K562 (cell line): ENCODE measurements at regions of chr14 and their contacts with region 1.

Region 1: DNA sequence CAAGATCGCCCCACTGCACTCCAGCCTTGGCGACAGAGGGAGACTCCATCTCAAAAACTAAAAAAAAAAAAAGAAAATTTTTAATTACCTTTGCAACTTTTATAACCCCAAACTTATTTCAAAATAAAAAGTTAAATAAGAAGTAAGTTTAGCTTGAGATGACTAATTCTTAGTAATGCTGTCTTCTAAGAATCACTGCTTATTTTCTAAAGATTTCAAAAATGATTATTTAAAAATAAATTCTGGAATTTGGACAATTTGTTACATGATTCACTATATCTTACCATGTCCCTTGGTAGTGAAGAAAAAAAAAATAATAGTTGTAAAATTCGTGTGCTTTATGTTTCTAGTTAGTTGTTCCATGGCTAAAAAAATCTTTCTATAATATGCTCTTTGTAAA is 11.6 kb upstream of the HECTD1 start:
- DNase-seq: no peak
- ATAC-seq: no peak
- H3K4me3 ChIP-seq: no peak overlapping the region
- H3K27ac ChIP-seq: no peak overlapping the region
- H3K4me1 ChIP-seq: no peaks in the 10 kb centered on the region
- H3K27me3 ChIP-seq: no peaks in the 10 kb centered on the region
- CTCF ChIP-seq: no peak
- EP300 ChIP-seq: no peak
- POLR2A ChIP-seq: no peak
- RAD21 ChIP-seq: no peak

Region 2: GRCh38 chr14:31229638-31230229 is 10.6 kb after region 1 on chr14:
- CTCF ChIA-PET with region 1: no interaction called
- POLR2A ChIA-PET with region 1: interaction called, 11 read pairs
- in situ Hi-C with region 1: no loop called
- intact Hi-C with region 1: no loop called
- DNase-seq: peak; percentile 67 to 91 (median 79)
- ATAC-seq: peak; percentile 98
- H3K4me3 ChIP-seq: peak overlapping the region; percentile 16; the same call in 1 of the 2 replicates
- H3K27ac ChIP-seq: peak overlapping the region; percentile 77
- H3K4me1 ChIP-seq: peaks cover 0 to 11% of the 10 kb centered on the region in 2 experiments; a peak in 3 of 5 replicates
- H3K27me3 ChIP-seq: no peaks in the 10 kb centered on the region
- CTCF ChIP-seq: no peak
- EP300 ChIP-seq: peak; percentile 94
- POLR2A ChIP-seq: peak; percentile 58
- RAD21 ChIP-seq: peak in 1 of 2 experiments; percentile 13; a peak in 1 of 4 replicates

Region 3: GRCh38 chr14:31476131-31476866 is 257.1 kb after region 1 on chr14:
- CTCF ChIA-PET with region 1: no interaction called
- POLR2A ChIA-PET with region 1: no interaction called
- in situ Hi-C with region 1: no loop called
- intact Hi-C with region 1: no loop called
- DNase-seq: no peak
- ATAC-seq: no peak
- H3K4me3 ChIP-seq: no peak overlapping the region
- H3K27ac ChIP-seq: no peak overlapping the region
- H3K4me1 ChIP-seq: no peaks in the 10 kb centered on the region
- H3K27me3 ChIP-seq: peaks cover 0 to 3% of the 10 kb centered on the region in 2 experiments; a peak in 1 of 5 replicates
- CTCF ChIP-seq: no peak
- EP300 ChIP-seq: no peak
- POLR2A ChIP-seq: no peak
- RAD21 ChIP-seq: no peak